Activated CD8-positive, alpha-beta memory T cell treated with anti-CD3 and anti-CD28 coated beads, Interleukin-2, amount 10 ng/mL, durations not matched to agents 7 days and 5 days (primary cell): ENCODE measurements at regions of chr17 and their contacts with region 1.

Region 1: GRCh38 chr17:56715613-56716357 is 117.9 kb downstream of the C17orf67 start:
- DNase-seq: peak; percentile 81
- ATAC-seq: peak; percentile 90
- H3K4me3 Mint-ChIP-seq: no peak overlapping the region
- H3K27ac Mint-ChIP-seq: no peak overlapping the region
- H3K4me1 Mint-ChIP-seq: peaks cover 7% of the 10 kb centered on the region
- H3K27me3 Mint-ChIP-seq: peaks cover 18% of the 10 kb centered on the region

Region 2: DNA sequence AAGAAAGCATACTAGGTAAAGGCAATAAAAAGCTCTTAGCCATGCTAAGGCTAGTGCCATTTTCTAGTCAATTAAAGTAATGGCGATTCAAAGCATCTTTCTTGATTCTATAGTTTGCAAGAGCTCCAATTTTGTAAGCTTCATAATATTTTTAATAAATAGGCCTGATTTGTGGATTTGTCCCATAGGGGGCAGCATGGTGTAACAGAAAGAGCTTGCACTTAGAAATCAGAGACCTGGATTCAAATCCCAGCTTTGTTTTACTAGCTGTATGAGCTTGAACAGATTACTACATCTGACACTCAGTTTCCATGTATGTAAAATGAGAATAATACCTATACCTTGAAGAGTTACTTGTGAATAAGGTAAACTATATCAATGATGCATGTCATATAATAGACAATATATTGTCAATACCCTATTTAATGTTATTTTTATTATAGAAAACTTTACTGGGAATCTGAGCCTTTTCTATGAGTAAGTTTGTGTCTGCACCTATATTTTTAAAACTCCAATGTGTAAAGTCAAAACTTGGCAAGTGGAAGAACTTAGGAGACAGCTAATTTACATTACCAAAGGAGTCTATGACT is 215.9 kb before region 1 on chr17:
- CTCF ChIA-PET with region 1: interaction called, 12 read pairs
- DNase-seq: no peak
- ATAC-seq: no peak
- H3K4me3 Mint-ChIP-seq: no peak overlapping the region
- H3K27ac Mint-ChIP-seq: no peak overlapping the region
- H3K4me1 Mint-ChIP-seq: no peaks in the 10 kb centered on the region
- H3K27me3 Mint-ChIP-seq: peaks cover 17% of the 10 kb centered on the region

Region 3: DNA sequence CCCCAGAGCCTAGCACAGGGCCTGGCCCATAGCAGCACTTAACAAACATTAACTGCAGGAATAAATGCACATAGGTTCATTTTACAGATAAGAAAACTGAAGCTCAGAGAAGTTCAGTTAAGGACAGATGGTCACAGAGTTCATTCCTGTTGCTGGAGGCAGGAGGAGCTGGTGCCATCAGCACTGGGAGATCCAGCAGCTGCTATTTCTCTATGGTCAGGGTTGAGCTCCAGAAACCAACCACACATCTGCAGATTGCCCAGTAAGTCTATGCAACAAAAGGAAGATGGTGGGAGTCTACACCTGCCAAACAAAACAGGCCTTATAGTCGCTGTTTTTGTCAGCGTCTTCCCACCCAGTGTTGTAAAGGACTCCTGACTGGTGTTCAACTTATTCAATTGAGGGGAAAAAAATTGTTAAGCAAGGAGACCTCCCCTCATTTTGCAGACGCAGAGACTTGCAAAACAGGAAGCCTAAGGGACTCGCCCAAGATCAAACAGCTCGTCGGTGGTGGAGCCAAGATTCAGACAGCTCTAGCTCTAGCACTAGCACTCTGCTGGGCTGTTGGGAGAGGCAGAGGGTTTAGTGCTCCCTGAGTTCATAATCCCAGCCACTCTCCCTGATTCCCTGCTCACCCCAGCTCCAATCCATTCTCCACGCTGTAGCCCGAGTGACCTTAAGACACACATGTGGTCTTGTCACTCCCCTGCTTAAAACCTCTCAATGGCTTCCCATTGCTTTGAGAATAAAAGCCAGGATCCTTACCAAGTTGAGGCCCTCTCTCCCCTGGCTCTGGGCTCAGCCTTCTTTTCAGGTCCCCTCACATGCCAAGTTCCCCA is 113.3 kb before region 1 on chr17:
- CTCF ChIA-PET with region 1: interaction called, 172 read pairs
- DNase-seq: no peak
- ATAC-seq: no peak
- H3K4me3 Mint-ChIP-seq: no peak overlapping the region
- H3K27ac Mint-ChIP-seq: no peak overlapping the region
- H3K4me1 Mint-ChIP-seq: no peaks in the 10 kb centered on the region
- H3K27me3 Mint-ChIP-seq: peaks cover 64% of the 10 kb centered on the region

Region 4: GRCh38 chr17:56690486-56691291 is 25.1 kb before region 1 on chr17:
- CTCF ChIA-PET with region 1: interaction called, 12 read pairs
- DNase-seq: no peak
- ATAC-seq: no peak
- H3K4me3 Mint-ChIP-seq: no peak overlapping the region
- H3K27ac Mint-ChIP-seq: no peak overlapping the region
- H3K4me1 Mint-ChIP-seq: no peaks in the 10 kb centered on the region
- H3K27me3 Mint-ChIP-seq: peaks cover 54% of the 10 kb centered on the region

Region 5: GRCh38 chr17:56779898-56780733 is 64.3 kb after region 1 on chr17:
- CTCF ChIA-PET with region 1: interaction called, 41 read pairs
- DNase-seq: peak; percentile 89
- ATAC-seq: peak; percentile 97
- H3K4me3 Mint-ChIP-seq: peak overlapping the region; percentile 77
- H3K27ac Mint-ChIP-seq: peak overlapping the region; percentile 76
- H3K4me1 Mint-ChIP-seq: peaks cover 19% of the 10 kb centered on the region
- H3K27me3 Mint-ChIP-seq: peaks cover 31% of the 10 kb centered on the region

Region 6: DNA sequence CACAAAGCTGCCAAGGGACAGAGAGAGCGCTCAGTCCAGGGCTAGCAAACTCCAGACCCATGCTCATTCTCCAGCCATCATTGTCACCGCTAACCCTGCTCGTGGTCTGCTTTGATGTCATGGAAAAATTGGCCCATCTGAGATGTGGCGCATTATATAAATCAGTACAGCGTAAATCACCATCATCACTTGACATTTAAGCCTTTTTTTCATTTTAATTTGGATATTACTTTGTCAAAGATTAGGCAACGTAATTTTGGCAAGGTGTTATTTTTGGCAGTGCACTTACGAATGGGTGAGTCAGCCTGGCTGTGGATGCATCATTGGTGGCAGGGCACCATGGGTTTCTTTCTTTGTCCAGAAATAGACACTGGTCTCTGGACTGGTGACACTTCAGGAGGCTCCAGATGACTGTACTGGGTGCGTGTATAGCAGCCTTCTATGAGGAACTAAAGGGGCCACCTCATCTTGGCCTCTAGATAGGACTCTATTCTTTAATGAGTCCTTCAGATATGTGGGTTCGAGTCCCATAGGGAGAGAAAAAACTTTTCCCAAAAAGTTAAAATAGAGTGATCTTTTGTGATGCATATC is 706.9 kb after region 1 on chr17:
- CTCF ChIA-PET with region 1: no interaction called
- DNase-seq: no peak
- ATAC-seq: no peak
- H3K4me3 Mint-ChIP-seq: no peak overlapping the region
- H3K27ac Mint-ChIP-seq: no peak overlapping the region
- H3K4me1 Mint-ChIP-seq: peaks cover 37% of the 10 kb centered on the region
- H3K27me3 Mint-ChIP-seq: no peaks in the 10 kb centered on the region